Heart right ventricle (tissue), 16 donors: ENCODE measurements at regions of chr10 and their contacts with region 1.

Region 1: DNA sequence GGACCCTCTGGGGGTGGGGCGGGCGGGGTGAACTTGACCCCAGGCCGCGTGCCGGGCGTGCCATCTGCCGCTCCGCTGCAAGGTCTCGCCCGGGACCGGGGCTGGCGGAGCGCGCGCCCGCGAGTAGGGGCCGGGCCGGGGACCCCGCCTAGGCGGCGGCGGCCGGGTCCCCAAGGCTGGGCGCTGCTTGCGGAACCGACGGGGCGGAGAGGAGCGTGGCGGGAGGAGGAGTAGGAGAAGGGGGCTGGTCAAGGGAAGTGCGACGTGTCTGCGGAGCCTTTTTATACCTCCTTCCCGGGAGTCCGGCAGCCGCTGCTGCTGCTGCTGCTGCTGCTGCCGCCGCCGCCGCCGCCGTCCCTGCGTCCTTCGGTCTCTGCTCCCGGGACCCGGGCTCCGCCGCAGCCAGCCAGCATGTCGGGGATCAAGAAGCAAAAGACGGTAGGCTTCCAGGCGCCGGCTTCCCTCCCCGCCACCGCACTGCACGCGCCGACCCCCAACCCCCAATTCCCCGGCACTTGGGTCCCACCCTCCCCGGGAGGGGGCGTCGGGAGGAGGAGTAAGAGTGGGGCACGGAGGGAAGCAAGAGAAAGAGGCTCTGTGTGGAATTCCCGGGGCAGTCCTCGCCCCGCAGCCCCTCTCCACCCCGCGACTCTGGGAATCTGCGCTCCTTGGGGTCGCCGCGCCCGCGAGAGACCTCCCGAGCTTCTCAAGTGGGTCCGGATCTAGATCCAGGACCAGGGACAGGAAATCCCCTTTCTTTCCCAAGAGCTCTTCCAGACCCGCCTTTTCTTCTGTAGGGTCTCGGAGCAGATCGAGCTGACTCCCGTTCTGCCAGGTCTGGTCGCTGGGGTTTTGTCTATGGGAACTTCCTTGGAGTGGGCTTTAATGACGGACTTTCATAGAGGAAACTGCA is at the start of gene PAPSS2:
- DNase-seq: peak; percentile 66 to 75
- ATAC-seq: peak; percentile 73 to 91 (median 87)
- H3K4me3 ChIP-seq: peak within 1 kb of the TSS; percentile 53 to 87 (median 78)
- H3K27ac ChIP-seq: peak within 1 kb of the TSS; percentile 31 to 89 (median 82)
- H3K4me1 ChIP-seq: peaks cover 0 to 36% (median 18%) of the 10 kb centered on the region in 9 donors
- H3K27me3 ChIP-seq: peaks cover 0 to 9% (median 0%) of the 10 kb centered on the region in 7 donors
- CTCF ChIP-seq: peak in 3 of 9 donors; percentile 21
- total RNA-seq, gene PAPSS2: 3.3 to 10.9 (median 7.5) TPM

Region 2: DNA sequence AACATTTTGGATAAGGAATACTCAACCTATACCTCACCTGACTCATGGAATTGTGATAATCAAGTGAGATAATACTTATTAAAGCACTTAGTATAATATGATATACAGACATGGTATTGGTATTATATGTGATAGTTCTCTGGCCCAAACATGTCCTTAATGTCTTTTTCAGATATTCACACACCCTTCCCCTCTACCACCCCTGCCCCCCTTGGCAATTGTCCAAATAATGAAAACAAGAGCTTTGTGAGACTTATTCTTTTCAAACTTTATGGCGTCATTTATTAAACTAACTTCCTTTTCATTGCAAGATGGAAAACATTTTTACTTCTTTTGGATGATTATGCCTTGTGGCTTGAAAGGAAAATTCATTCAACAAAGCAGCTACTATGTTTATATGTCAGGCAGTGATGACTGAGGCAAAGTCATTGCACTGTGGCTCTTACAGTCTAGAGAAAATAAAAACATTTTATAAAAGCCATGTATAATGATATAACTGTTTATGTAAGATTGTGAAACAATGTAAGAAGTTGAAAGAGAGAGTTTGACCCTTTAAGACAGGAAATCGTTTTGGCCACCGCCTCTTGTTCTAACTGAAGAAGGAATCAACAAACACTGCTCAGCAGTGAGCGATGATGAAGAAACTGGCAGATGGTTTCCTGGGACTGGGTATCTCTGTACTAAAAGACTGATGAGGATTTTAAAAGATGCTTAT is 127.8 kb before region 1 on chr10:
- intact Hi-C with region 1: loop called in 4 of 10 experiments (anchors 2 to 10 kb)
- DNase-seq: no peak
- ATAC-seq: peak in 7 of 8 donors; percentile 44 to 85 (median 72)
- H3K4me3 ChIP-seq: peak overlapping the region in 1 of 10 donors; percentile 3
- H3K27ac ChIP-seq: peak overlapping the region; percentile 6 to 73 (median 58)
- H3K4me1 ChIP-seq: peaks cover 0 to 29% (median 18%) of the 10 kb centered on the region in 9 donors
- H3K27me3 ChIP-seq: no peaks in the 10 kb centered on the region
- CTCF ChIP-seq: no peak

Region 3: GRCh38 chr10:87538092-87539015 is 121.5 kb before region 1 on chr10:
- intact Hi-C with region 1: loop called in 4 of 10 experiments (anchors 2 to 10 kb)
- DNase-seq: no peak
- ATAC-seq: no peak
- H3K4me3 ChIP-seq: no peak overlapping the region
- H3K27ac ChIP-seq: no peak overlapping the region
- H3K4me1 ChIP-seq: peaks cover 0 to 8% (median 3%) of the 10 kb centered on the region in 9 donors
- H3K27me3 ChIP-seq: no peaks in the 10 kb centered on the region
- CTCF ChIP-seq: no peak

Region 4: DNA sequence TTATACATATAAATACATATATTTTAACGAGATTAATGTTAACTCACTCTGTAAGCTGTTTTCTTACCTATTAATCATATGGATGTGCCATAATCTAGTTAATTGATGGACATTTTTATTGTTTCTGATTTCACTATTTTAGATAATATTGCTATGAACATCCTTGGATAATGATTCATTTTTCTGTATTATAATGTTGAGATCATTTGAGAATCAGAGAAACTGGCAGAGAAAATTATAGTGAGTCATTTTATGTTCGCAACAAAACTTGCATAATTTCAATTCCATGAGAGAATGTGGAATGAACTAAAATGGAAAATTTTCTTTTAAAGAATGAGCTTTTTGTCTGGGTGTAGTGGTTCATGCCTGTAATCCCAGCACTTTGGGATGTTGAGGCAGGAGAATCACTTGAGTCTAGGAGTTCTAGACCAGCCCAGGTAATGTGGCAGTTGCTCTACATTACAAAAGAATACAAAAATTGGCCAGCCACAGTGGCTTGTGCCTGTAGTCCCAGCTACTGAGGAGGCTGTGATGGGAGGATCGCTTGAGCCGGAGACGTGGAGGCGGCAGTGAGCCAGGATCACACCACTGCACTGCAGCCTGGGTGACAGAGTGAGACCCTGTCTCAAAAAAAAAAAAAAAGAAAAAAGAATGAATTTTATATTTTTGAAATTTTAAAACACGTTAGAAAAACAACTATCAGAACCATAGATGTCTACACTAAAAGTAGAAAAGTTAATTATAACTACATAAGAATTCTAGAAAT is 40.4 kb after region 1 on chr10:
- intact Hi-C with region 1: no loop called
- DNase-seq: no peak
- ATAC-seq: peak in 2 of 8 donors; percentile 11 to 19
- H3K4me3 ChIP-seq: no peak overlapping the region
- H3K27ac ChIP-seq: peak overlapping the region in 4 of 10 donors; percentile 11 to 43 (median 27)
- H3K4me1 ChIP-seq: peaks cover 0 to 8% (median 0%) of the 10 kb centered on the region in 9 donors
- H3K27me3 ChIP-seq: no peaks in the 10 kb centered on the region
- CTCF ChIP-seq: no peak

Region 5: GRCh38 chr10:87715552-87716347 is 55.9 kb after region 1 on chr10:
- intact Hi-C with region 1: loop called in 1 of 10 experiments (anchors 5 kb)
- DNase-seq: no peak
- ATAC-seq: peak in 6 of 8 donors; percentile 20 to 73 (median 36)
- H3K4me3 ChIP-seq: no peak overlapping the region
- H3K27ac ChIP-seq: peak overlapping the region in 9 of 10 donors; percentile 4 to 79 (median 33)
- H3K4me1 ChIP-seq: peaks cover 5 to 36% (median 25%) of the 10 kb centered on the region in 9 donors
- H3K27me3 ChIP-seq: no peaks in the 10 kb centered on the region
- CTCF ChIP-seq: no peak

Region 6: GRCh38 chr10:87734987-87735827 is 75.4 kb after region 1 on chr10:
- intact Hi-C with region 1: loop called (anchors 1 to 5 kb)
- DNase-seq: peak in 1 of 2 donors; percentile 35
- ATAC-seq: peak; percentile 55 to 87 (median 85)
- H3K4me3 ChIP-seq: peak overlapping the region in 2 of 10 donors; percentile 12 to 21
- H3K27ac ChIP-seq: peak overlapping the region in 2 of 10 donors; percentile 29 to 30
- H3K4me1 ChIP-seq: peaks cover 0 to 20% (median 6%) of the 10 kb centered on the region in 9 donors
- H3K27me3 ChIP-seq: no peaks in the 10 kb centered on the region
- CTCF ChIP-seq: peak; percentile 74 to 86 (median 82)

Region 7: DNA sequence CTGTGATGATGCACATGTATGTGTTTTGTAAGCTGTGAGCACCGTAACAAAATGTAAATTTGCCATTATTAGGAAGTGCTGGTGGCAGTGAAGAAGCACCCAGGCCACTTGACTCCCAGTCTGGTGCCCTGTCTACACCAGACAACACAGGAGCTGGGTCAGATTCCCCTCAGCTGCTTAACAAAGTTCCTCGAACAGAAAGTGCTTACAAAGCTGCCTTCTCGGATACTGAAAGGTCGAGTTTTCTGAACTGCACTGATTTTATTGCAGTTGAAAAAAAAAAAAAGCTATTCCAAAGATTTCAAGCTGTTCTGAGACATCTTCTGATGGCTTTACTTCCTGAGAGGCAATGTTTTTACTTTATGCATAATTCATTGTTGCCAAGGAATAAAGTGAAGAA is 87.1 kb after region 1 on chr10:
- intact Hi-C with region 1: no loop called
- DNase-seq: no peak
- ATAC-seq: no peak
- H3K4me3 ChIP-seq: no peak overlapping the region
- H3K27ac ChIP-seq: no peak overlapping the region
- H3K4me1 ChIP-seq: no peaks in the 10 kb centered on the region
- H3K27me3 ChIP-seq: no peaks in the 10 kb centered on the region
- CTCF ChIP-seq: no peak

Region 8: DNA sequence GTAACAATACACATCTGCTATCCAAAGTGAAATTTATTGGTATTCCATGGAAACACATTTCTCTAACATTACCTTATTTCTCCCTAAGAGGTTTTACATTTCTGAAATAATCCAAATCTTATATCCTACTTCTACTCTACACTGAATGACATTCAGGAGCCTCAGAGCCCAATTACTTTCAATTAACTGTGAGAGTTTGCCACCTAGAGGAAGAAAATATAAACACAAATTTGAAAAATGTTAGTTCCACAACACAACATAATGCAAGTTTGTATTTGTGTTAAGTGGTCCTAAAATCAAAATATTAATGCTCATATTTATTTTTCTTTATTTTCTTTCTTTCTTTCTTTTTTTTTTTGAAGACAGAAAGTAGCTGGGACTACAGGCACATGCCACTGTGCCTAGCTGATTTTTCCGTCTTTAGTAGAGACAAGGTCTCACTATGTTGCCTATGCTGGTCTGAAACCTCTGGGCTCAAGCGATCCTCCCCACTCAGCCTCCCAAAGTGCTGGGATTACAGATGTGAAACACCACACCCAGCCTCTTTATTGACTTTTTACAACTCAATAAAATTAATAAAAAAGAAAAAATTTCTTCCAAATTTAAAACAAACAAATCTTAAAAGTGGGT is 112.2 kb after region 1 on chr10:
- intact Hi-C with region 1: loop called in 1 of 10 experiments (anchors 2 kb)
- DNase-seq: no peak
- ATAC-seq: no peak
- H3K4me3 ChIP-seq: no peak overlapping the region
- H3K27ac ChIP-seq: no peak overlapping the region
- H3K4me1 ChIP-seq: peaks cover 0 to 9% (median 0%) of the 10 kb centered on the region in 9 donors
- H3K27me3 ChIP-seq: no peaks in the 10 kb centered on the region
- CTCF ChIP-seq: peak in 8 of 9 donors; percentile 30 to 72 (median 58)

Region 9: DNA sequence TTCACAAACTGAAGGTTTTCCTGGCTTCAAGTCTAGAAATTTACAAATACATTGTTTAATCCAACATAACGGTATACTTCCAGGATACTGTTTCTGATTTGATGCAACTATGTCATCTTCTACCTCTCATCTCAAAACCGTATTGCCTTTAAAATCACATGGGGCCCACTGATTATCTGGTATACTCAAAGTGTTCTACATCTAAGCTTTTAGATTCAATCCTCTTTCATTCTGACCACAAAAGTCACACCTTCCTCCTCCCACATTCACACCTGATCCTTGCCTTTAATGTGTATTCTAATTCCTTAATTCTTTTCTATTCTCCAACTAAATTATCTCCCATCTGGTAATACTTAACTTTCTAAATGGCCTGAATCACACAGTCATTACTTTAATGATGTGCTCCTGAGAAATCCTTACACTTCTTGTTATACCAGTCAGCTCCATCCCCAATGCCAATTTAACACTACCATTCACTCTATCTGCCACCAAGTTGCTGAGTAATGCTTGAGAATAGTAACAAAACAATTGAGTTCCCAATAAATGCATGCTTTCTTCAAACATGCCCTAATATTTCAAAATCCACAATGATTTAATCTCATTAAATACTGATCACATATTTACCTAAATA is 145.2 kb after region 1 on chr10:
- intact Hi-C with region 1: no loop called
- DNase-seq: no peak
- ATAC-seq: peak in 2 of 8 donors; percentile 38 to 43
- H3K4me3 ChIP-seq: no peak overlapping the region
- H3K27ac ChIP-seq: peak overlapping the region in 3 of 10 donors; percentile 7 to 55 (median 45)
- H3K4me1 ChIP-seq: peaks cover 0 to 30% (median 7%) of the 10 kb centered on the region in 9 donors
- H3K27me3 ChIP-seq: no peaks in the 10 kb centered on the region
- CTCF ChIP-seq: no peak

Region 10: DNA sequence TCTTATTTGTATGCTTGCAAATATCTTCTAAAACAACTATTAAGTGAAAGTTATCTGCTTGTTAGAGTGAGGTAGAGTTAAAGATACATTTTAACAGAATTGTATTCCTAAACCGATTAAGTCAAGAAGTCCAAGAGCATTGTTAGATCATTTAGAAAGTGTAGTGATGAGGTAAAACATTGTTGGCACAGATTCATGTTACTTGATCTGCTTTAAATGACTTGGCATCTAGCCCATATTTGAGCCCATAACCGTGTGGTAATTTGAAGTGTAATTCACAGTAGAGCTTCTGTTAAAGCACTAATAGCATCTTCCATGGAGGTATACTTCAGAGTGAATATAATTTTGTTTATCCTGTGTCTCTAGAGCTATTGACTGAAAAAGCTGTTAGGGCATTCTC is 265.7 kb after region 1 on chr10:
- intact Hi-C with region 1: loop called in 1 of 10 experiments (anchors 10 kb)
- DNase-seq: no peak
- ATAC-seq: peak in 2 of 8 donors; percentile 8 to 25
- H3K4me3 ChIP-seq: no peak overlapping the region
- H3K27ac ChIP-seq: no peak overlapping the region
- H3K4me1 ChIP-seq: peaks cover 5 to 94% (median 76%) of the 10 kb centered on the region in 9 donors
- H3K27me3 ChIP-seq: no peaks in the 10 kb centered on the region
- CTCF ChIP-seq: no peak

Region 11: GRCh38 chr10:88205842-88206446 is 546.1 kb after region 1 on chr10:
- intact Hi-C with region 1: no loop called
- DNase-seq: no peak
- ATAC-seq: no peak
- H3K4me3 ChIP-seq: no peak overlapping the region
- H3K27ac ChIP-seq: no peak overlapping the region
- H3K4me1 ChIP-seq: peaks cover 0 to 7% (median 0%) of the 10 kb centered on the region in 9 donors
- H3K27me3 ChIP-seq: no peaks in the 10 kb centered on the region
- CTCF ChIP-seq: no peak